ENCODE measurements at regions of chr15 and their contacts with region 1.

Region 1: DNA sequence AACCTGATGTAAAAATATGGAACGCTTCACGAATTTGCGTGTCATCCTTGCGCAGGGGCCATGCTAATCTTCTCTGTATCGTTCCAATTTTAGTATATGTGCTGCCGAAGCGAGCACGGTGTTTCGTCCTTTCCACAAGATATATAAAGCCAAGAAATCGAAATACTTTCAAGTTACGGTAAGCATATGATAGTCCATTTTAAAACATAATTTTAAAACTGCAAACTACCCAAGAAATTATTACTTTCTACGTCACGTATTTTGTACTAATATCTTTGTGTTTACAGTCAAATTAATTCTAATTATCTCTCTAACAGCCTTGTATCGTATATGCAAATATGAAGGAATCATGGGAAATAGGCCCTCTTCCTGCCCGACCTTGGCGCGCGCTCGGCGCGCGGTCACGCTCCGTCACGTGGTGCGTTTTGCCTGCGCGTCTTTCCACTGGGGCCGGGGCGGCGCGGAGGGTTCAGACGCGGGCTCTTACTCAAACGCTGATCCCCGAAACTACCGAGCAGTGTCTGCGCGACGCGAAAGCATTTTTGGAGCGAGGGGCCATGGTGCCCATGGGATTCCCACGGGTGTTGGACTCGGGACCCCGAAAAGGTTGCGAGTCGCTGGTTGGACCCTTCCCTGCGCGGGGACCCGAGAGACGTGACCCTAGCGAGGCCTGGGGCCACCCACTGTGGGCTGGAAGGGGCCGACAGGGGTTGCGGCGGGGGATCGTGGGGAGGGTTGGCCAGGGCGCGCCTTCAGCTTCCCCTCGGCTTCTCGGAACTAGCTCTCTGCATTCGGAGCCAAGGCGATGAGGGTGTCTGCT is at the start of gene RNU6-1:
- DNase-seq: peak; percentile 93
- ATAC-seq: peak; percentile 82
- H3K4me3 Mint-ChIP-seq: peak within 1 kb of the TSS; percentile 95
- H3K27ac Mint-ChIP-seq: peak within 1 kb of the TSS; percentile 93
- H3K4me1 Mint-ChIP-seq: peaks cover 40% of the 10 kb centered on the region
- H3K27me3 Mint-ChIP-seq: peaks cover 16% of the 10 kb centered on the region
- CTCF ChIP-seq: no peak
- total RNA-seq, gene RNU6-1: not detected in 2 replicates

Region 2: DNA sequence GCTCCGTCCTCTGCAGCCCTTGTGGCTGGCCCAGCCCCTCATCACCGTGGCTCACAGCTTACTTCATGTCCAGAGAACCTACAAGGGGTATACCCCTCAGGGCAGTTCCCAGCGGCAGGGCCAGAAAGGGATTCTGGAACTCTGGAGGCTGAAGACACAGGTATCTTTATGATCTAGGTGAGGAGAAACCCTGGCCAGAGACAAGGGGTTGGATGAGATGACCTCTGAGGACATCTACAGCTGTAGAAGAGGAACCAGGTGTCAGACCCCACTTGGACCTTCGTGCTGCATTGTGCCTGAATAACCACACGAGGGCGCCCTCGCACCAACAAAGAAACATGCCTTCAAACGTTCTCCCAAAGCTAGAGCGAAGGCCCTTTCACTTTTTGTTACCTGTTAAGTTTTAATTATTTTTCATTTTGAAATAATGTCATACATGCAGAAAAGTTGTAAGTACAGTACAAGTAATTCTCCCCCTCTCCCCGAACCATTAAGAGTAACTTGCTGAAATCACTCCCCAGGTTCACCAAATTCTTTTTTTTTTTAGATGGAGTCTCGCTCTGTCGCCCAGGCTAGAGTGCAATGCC is 893.5 kb before region 1 on chr15:
- CTCF ChIA-PET with region 1: interaction called, 7 read pairs
- POLR2A ChIA-PET with region 1: interaction called, 3 read pairs
- intact Hi-C with region 1: loop called (anchors 1 kb)
- DNase-seq: peak; percentile 69
- ATAC-seq: peak; percentile 93
- H3K4me3 Mint-ChIP-seq: peak overlapping the region; percentile 17
- H3K27ac Mint-ChIP-seq: no peak overlapping the region
- H3K4me1 Mint-ChIP-seq: peaks cover 10% of the 10 kb centered on the region
- H3K27me3 Mint-ChIP-seq: peaks cover 9% of the 10 kb centered on the region
- CTCF ChIP-seq: no peak

Region 3: DNA sequence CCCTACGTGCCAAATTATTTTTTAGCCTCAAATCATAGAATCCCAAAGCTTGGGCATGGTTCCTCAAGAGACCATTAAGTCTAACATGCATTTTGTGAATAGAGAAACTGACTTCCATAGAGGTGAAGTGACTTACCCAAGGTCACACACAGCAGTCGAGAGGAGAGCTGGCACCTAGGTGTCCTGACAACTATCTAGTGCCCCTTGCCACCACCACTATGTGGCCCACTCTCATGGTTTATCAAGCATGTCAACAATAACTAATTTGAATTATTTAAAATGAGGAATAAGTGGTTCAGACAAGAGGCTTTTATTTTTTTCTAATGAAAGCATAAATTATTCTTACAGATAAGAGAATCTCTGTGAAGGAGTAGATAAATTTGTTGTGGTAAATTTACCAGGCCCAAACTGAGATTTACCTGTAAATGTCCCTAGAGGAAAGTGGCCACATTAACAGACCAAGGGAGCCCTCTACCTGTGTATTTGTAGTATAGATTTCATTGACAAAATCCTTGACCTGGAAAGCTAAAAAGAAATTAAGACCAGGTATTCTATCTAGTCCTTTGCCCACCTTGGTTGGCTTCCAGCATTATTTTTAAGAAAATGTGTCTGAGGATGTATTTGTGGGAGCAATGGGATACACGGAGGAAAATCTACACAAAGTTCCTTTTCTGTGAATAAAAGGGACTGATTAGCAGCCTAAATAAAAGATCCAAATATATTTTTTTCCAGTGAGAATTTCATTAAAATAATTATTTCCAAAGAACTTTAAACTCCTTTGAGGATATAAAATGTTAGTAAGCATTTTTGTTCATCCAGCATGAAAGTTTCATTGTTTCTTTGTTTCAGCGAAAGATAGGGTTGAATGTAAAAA is 536.4 kb before region 1 on chr15:
- CTCF ChIA-PET with region 1: no interaction called
- POLR2A ChIA-PET with region 1: no interaction called
- intact Hi-C with region 1: loop called (anchors 10 kb)
- DNase-seq: no peak
- ATAC-seq: peak; percentile 56
- H3K4me3 Mint-ChIP-seq: no peak overlapping the region
- H3K27ac Mint-ChIP-seq: no peak overlapping the region
- H3K4me1 Mint-ChIP-seq: no peaks in the 10 kb centered on the region
- H3K27me3 Mint-ChIP-seq: no peaks in the 10 kb centered on the region
- CTCF ChIP-seq: no peak

Region 4: DNA sequence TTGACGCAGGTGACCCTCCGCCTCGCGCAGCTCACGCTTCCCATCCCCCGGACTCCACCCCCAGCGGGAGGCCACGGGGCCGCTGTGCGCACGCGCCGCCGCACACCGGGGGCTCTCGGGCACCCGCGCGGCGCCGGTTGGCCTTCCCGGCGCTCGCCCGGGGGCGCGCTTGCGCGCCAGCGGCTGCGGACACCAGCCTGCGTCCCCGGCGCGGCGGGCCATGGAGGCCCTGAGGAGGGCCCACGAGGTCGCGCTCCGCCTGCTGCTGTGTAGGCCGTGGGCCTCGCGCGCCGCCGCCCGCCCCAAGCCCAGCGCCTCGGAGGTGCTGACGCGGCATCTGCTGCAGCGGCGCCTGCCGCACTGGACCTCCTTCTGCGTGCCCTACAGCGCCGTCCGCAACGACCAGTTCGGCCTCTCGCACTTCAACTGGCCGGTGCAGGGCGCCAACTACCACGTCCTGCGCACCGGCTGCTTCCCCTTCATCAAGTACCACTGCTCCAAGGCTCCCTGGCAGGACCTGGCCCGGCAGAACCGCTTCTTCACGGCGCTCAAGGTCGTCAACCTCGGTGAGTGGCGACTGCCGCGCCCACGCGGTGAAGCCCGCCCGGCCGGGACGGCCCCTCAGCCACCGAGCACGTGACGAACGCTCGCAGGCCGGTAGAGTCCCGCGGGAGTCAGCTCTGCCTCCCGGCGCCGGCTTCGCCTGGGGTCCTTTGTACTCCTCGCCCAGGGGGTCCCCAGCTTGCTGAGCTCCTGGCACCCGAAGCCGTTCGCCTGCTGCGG is 318.9 kb before region 1 on chr15 and contains the start of gene C15orf61:
- CTCF ChIA-PET with region 1: no interaction called
- POLR2A ChIA-PET with region 1: interaction called, 3 read pairs
- intact Hi-C with region 1: loop called (anchors 1 kb)
- DNase-seq: peak; percentile 88
- ATAC-seq: peak; percentile 81
- H3K4me3 Mint-ChIP-seq: peak within 1 kb of the TSS; percentile 93
- H3K27ac Mint-ChIP-seq: peak within 1 kb of the TSS; percentile 92
- H3K4me1 Mint-ChIP-seq: peaks cover 22% of the 10 kb centered on the region
- H3K27me3 Mint-ChIP-seq: no peaks in the 10 kb centered on the region
- CTCF ChIP-seq: no peak
- total RNA-seq, gene C15orf61: 3.3 and 4.2 TPM in 2 replicates

Region 5: DNA sequence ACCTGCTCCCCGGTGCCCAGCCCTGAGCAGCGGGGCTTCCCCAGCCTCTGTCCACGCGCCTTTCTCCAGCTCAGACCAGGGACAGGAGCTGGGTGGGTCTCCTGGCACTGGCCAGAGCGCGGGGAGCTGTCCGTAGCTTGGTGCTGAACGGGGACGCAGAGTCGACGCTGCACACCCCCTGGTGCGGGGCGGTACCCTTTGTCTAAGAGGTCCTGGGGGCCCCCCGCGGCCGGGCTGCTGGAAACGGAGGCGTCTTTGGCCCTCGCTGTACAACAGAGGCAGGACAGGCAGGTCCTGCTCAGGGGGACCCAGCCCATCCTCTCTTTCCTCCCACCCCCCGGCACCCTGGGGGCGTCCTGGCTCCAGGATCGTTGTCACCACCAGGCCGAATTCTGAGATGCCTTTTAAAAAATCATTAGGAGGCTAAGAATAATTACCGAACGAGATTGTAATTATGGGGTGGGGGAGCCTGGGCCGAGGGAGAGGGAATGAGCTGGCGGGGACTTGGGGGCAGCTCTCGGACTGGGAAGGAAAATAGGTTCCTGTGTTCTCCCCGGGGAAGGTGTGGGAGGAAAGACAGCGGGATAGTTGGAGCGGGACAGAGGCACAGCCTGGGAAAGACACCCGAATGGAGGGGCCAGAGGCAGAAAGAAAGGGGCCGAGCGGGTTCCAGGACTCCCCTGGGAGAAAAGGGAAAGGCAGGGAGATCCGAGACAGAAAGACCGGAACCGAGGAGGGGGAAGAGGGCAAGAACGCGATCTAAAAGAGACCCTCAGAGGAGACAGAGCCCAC is 19.0 kb before region 1 on chr15:
- CTCF ChIA-PET with region 1: interaction called, 14 read pairs
- POLR2A ChIA-PET with region 1: no interaction called
- intact Hi-C with region 1: loop called (anchors 2 kb)
- DNase-seq: no peak
- ATAC-seq: peak; percentile 53
- H3K4me3 Mint-ChIP-seq: peak overlapping the region; percentile 19
- H3K27ac Mint-ChIP-seq: peak overlapping the region; percentile 30
- H3K4me1 Mint-ChIP-seq: peaks cover 43% of the 10 kb centered on the region
- H3K27me3 Mint-ChIP-seq: peaks cover 71% of the 10 kb centered on the region
- CTCF ChIP-seq: no peak

Region 6: GRCh38 chr15:67955252-67955651 is 115.1 kb after region 1 on chr15:
- CTCF ChIA-PET with region 1: no interaction called
- POLR2A ChIA-PET with region 1: no interaction called
- intact Hi-C with region 1: no loop called
- DNase-seq: no peak
- ATAC-seq: no peak
- H3K4me3 Mint-ChIP-seq: no peak overlapping the region
- H3K27ac Mint-ChIP-seq: no peak overlapping the region
- H3K4me1 Mint-ChIP-seq: peaks cover 10% of the 10 kb centered on the region
- H3K27me3 Mint-ChIP-seq: no peaks in the 10 kb centered on the region
- CTCF ChIP-seq: no peak

Region 7: GRCh38 chr15:68053701-68054627 is 213.8 kb after region 1 on chr15 and contains the start of gene PIAS1:
- CTCF ChIA-PET with region 1: no interaction called
- POLR2A ChIA-PET with region 1: interaction called, 8 read pairs
- intact Hi-C with region 1: loop called (anchors 1 kb)
- DNase-seq: peak; percentile 91
- ATAC-seq: peak; percentile 90
- H3K4me3 Mint-ChIP-seq: peak within 1 kb of the TSS; percentile 94
- H3K27ac Mint-ChIP-seq: peak within 1 kb of the TSS; percentile 94
- H3K4me1 Mint-ChIP-seq: peaks cover 35% of the 10 kb centered on the region
- H3K27me3 Mint-ChIP-seq: no peaks in the 10 kb centered on the region
- CTCF ChIP-seq: no peak
- total RNA-seq, gene PIAS1: 47.0 and 56.3 TPM in 2 replicates

Region 8: DNA sequence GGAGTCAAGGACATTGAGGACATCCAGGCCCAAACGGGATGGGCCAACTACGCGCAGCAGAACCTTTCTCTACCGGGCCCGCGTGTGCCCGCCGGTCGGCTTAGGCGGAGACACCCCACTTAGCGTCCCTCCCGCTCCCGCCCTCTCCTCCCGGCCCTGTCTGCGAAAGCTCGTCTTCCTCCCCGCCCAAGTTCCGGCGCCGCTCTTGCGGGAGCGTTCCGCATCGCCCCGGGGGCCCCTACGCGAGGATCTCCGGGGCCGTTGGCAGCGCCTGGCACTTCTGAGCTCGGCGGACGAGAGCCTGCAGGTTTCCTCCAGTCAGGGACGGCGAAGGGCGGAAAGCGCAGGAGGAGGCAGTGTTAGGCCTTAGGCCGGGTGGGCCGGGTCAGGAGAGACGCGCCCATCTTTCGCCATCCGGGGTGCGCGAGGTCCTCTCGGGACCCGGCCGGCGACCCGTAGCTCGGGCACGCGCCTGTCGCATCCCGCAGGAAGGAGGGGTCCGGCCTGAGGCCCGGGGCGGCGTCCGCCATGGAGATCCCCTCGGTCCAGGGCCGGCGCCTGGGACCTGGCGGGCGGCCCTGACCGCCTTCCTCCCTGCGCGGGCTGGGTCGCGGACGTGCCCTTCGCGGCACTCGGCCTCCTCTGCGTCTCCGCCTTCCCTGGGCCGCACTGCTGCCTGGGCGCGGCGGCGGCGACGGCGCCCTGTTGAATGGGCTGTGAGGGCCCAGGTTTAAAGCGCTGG is 437.6 kb after region 1 on chr15 and contains the start of gene FEM1B:
- CTCF ChIA-PET with region 1: no interaction called
- POLR2A ChIA-PET with region 1: interaction called, 6 read pairs
- intact Hi-C with region 1: loop called (anchors 1 kb)
- DNase-seq: peak; percentile 88
- ATAC-seq: peak; percentile 81
- H3K4me3 Mint-ChIP-seq: peak within 1 kb of the TSS; percentile 93
- H3K27ac Mint-ChIP-seq: peak within 1 kb of the TSS; percentile 96
- H3K4me1 Mint-ChIP-seq: peaks cover 55% of the 10 kb centered on the region
- H3K27me3 Mint-ChIP-seq: no peaks in the 10 kb centered on the region
- CTCF ChIP-seq: no peak
- total RNA-seq, gene FEM1B: 42.2 and 47.7 TPM in 2 replicates

Region 9: DNA sequence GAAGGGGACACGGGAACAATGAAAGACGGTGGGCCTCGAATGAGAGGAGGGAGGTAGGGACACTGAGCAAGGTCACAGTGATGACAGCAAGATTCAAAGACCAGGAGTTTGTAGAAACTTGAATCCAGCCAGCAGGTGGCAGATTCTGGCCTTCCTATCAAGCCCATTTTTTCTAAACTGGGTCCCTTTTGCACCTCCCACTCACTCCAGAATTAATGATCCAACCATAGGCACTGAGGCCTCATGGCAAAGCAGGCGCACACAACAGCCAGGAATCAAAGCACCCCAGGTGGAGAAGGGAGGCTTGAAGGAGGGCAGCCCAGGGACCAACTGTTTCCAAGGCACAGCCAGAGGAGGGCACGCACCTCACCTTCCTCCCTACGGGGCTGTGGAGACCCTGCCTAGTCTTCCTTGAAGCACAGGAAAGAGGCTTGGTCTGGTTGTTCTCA is 890.4 kb after region 1 on chr15:
- CTCF ChIA-PET with region 1: no interaction called
- POLR2A ChIA-PET with region 1: no interaction called
- intact Hi-C with region 1: no loop called
- DNase-seq: no peak
- ATAC-seq: no peak
- H3K4me3 Mint-ChIP-seq: no peak overlapping the region
- H3K27ac Mint-ChIP-seq: no peak overlapping the region
- H3K4me1 Mint-ChIP-seq: peaks cover 21% of the 10 kb centered on the region
- H3K27me3 Mint-ChIP-seq: peaks cover 2% of the 10 kb centered on the region
- CTCF ChIP-seq: no peak

Measured in activated B cell treated with CpG ODN at 0.5 μM for 24 hours (primary cell).